ENCODE measurements at regions of chr10 and their contacts with region 1.

Region 1: GRCh38 chr10:87861953-87862678 is 1.2 kb downstream of the KLLN start:
- DNase-seq: peak; percentile 99

Region 2: GRCh38 chr10:87585565-87586514 is 276.3 kb before region 1 on chr10:
- in situ Hi-C with region 1: no loop called
- DNase-seq: no peak

Region 3: DNA sequence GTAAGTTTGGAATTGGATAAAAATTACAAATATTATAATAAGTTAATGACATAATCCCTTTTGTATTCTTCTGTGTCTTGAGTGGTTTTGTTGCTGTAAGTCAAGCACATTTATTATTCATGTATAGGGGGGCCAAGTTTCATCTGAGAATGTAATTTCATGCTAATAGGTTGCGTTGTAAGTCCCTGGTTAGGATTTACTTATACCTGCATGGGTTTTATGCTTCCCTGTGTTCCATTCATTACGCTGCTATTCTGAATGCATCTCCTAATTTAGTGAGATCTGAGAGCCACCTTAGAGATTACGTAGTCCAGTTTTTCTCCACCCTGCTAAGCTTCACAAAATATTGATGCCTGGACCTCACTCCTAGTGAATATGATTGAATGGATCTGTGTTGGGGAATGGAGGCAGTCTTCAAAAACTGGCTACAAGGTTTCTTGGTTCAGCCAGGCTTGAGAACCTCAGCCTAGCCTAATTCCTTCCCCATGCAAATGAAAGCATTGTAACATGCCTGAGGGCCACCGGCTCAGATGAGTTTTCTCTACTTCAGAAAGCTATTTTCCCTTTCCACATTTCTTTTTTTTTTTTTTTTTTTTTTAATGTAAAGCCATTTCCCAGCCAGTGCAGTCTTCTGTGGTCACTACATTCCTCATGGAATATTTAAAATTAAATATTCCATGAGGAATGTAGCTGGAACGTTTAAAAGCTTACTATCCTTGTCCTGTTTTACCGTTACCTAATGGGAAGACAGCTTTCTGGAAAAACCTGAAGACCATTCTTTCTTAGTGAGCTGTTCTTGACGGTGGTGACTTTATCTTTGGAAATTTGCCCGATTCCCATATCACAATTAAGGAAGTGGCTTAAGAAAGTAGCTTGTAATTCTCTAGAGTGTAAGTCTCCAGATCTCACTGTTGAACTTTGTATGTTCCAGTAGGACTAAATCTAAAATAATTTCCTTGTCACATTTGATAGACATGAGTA is 186.4 kb before region 1 on chr10:
- in situ Hi-C with region 1: no loop called
- DNase-seq: no peak

Region 4: DNA sequence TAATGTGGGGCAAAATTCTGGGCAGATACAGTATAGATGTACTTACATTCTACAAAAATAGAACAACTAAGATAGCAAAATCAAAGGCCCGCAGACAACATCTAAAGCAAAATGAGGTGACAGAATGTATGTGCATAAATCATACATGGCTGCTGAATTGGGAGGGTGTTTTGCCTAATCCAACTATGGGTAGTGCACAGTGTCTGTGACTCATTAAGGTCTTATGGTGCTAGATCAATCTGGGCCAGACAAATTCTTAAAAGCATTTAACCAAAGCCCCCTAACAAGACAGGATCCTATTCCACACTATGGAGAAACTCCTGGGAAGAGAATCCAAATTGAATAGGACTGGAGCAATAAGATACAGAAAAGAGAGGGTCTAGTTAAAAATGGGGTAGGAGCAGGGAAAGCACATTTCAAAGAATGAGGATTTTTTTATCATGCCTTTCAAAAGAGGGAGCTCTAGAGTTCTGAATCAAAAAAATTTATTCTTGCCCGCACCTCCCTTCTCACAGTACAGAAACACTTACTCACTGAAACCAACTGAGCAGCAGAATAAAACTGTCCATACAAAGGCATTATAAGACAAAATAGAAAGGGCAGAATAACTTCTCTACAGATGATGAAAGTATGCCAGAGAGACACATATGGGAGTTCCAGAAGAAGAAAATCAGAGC is 539.7 kb after region 1 on chr10:
- in situ Hi-C with region 1: loop called (anchors 25 kb)
- DNase-seq: peak; percentile 45

Region 5: GRCh38 chr10:88525371-88526079 is 663.4 kb after region 1 on chr10:
- in situ Hi-C with region 1: loop called (anchors 25 kb)
- DNase-seq: no peak